ENCODE measurements at regions of chr7 and their contacts with region 1.

Region 1: GRCh38 chr7:150962553-150963399 is 15.3 kb downstream of the KCNH2 start:
- DNase-seq: peak; percentile 83
- ATAC-seq: peak; percentile 93
- H3K4me3 Mint-ChIP-seq: no peak overlapping the region
- H3K27ac Mint-ChIP-seq: no peak overlapping the region
- H3K4me1 Mint-ChIP-seq: peaks cover 17% of the 10 kb centered on the region
- H3K27me3 Mint-ChIP-seq: no peaks in the 10 kb centered on the region
- CTCF ChIP-seq: peak; percentile 56

Region 2: GRCh38 chr7:150685219-150686029 is 277.4 kb before region 1 on chr7 and contains the start of gene GIMAP2:
- CTCF ChIA-PET with region 1: no interaction called
- POLR2A ChIA-PET with region 1: no interaction called
- DNase-seq: no peak
- ATAC-seq: no peak
- H3K4me3 Mint-ChIP-seq: no peak within 1 kb of the TSS
- H3K27ac Mint-ChIP-seq: no peak within 1 kb of the TSS
- H3K4me1 Mint-ChIP-seq: peaks cover 7% of the 10 kb centered on the region
- H3K27me3 Mint-ChIP-seq: peaks cover 87% of the 10 kb centered on the region
- CTCF ChIP-seq: no peak
- total RNA-seq, gene GIMAP2: 0.15 to 0.37 TPM (median 0.18 TPM) in 3 replicates

Region 3: GRCh38 chr7:150937848-150938561 is 24.8 kb before region 1 on chr7:
- CTCF ChIA-PET with region 1: interaction called, 10 read pairs
- POLR2A ChIA-PET with region 1: no interaction called
- DNase-seq: no peak
- ATAC-seq: peak; percentile 65
- H3K4me3 Mint-ChIP-seq: no peak overlapping the region
- H3K27ac Mint-ChIP-seq: no peak overlapping the region
- H3K4me1 Mint-ChIP-seq: peaks cover 16% of the 10 kb centered on the region
- H3K27me3 Mint-ChIP-seq: no peaks in the 10 kb centered on the region
- CTCF ChIP-seq: no peak

Region 4: GRCh38 chr7:150945833-150946420 is 16.8 kb before region 1 on chr7:
- CTCF ChIA-PET with region 1: interaction called, 21 read pairs
- POLR2A ChIA-PET with region 1: no interaction called
- DNase-seq: no peak
- ATAC-seq: no peak
- H3K4me3 Mint-ChIP-seq: no peak overlapping the region
- H3K27ac Mint-ChIP-seq: no peak overlapping the region
- H3K4me1 Mint-ChIP-seq: peaks cover 48% of the 10 kb centered on the region
- H3K27me3 Mint-ChIP-seq: peaks cover 6% of the 10 kb centered on the region
- CTCF ChIP-seq: no peak

Region 5: GRCh38 chr7:150974468-150975391 is 12.0 kb after region 1 on chr7:
- CTCF ChIA-PET with region 1: interaction called, 118 read pairs
- POLR2A ChIA-PET with region 1: interaction called, 4 read pairs
- DNase-seq: peak; percentile 62
- ATAC-seq: peak; percentile 2; the same call in 1 of the 2 replicates
- H3K4me3 Mint-ChIP-seq: peak overlapping the region; percentile 82
- H3K27ac Mint-ChIP-seq: no peak overlapping the region
- H3K4me1 Mint-ChIP-seq: peaks cover 52% of the 10 kb centered on the region
- H3K27me3 Mint-ChIP-seq: peaks cover 30% of the 10 kb centered on the region
- CTCF ChIP-seq: no peak

Region 6: GRCh38 chr7:150988230-150989226 is 25.8 kb after region 1 on chr7:
- CTCF ChIA-PET with region 1: interaction called, 96 read pairs
- POLR2A ChIA-PET with region 1: no interaction called
- DNase-seq: peak; percentile 93
- ATAC-seq: peak; percentile 68
- H3K4me3 Mint-ChIP-seq: peak overlapping the region; percentile 71
- H3K27ac Mint-ChIP-seq: no peak overlapping the region
- H3K4me1 Mint-ChIP-seq: peaks cover 32% of the 10 kb centered on the region
- H3K27me3 Mint-ChIP-seq: peaks cover 32% of the 10 kb centered on the region
- CTCF ChIP-seq: peak; percentile 92

Region 7: GRCh38 chr7:151028131-151028947 is 65.6 kb after region 1 on chr7 and contains the start of gene ABCB8:
- CTCF ChIA-PET with region 1: interaction called, 19 read pairs
- POLR2A ChIA-PET with region 1: no interaction called
- DNase-seq: peak; percentile 99
- ATAC-seq: peak; percentile 95
- H3K4me3 Mint-ChIP-seq: peak within 1 kb of the TSS; percentile 92
- H3K27ac Mint-ChIP-seq: peak within 1 kb of the TSS; percentile 99
- H3K4me1 Mint-ChIP-seq: peaks cover 24% of the 10 kb centered on the region
- H3K27me3 Mint-ChIP-seq: peaks cover 8% of the 10 kb centered on the region; the same call in 1 of the 2 replicates
- CTCF ChIP-seq: no peak
- total RNA-seq, gene ABCB8: 27.9 to 35.9 TPM (median 28.4 TPM) in 3 replicates